HEK293 (cell line): ENCODE measurements at regions of chr17 and their contacts with region 1.

Region 1: DNA sequence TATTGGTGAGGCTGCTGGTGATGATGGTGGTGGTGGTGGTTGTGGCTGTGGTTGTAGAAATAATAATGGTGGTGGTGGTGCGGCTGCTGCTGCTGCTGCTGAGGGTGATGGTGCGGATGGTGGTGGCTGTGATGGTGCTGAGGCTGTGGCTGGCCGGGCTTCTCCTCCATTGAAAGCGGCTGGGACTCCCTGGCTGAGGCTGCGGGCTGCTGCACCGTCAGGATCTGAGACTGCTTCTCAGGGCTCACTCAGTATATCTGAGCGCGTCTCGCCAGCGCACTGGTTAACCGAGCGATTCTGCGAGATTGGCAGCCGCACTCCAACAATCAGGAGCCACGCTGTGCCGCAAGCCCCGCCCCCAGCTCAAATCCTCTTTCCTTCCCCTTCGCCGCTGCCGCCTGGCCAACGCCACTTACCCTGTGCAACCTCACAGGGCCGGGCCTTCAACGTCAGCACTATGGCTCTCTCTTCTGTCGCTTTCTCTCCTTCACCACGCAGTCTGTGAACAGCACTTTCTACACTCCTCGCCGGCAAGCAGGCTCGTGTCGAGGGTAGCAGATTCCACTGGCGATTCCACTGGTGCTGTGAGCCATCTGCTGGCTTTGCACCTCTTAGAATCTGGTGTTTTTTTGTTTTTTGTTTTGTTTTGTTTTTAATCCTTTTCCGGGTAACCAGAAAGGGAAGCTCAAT is at the start of gene NUFIP2:
- H3K4me3 ChIP-seq: peak within 1 kb of the TSS; percentile 86
- H3K27ac ChIP-seq: peak within 1 kb of the TSS; percentile 99
- H3K4me1 ChIP-seq: peaks cover 11% of the 10 kb centered on the region
- CTCF ChIP-seq: no peak; the same call in 1 of the 2 replicates

Region 2: DNA sequence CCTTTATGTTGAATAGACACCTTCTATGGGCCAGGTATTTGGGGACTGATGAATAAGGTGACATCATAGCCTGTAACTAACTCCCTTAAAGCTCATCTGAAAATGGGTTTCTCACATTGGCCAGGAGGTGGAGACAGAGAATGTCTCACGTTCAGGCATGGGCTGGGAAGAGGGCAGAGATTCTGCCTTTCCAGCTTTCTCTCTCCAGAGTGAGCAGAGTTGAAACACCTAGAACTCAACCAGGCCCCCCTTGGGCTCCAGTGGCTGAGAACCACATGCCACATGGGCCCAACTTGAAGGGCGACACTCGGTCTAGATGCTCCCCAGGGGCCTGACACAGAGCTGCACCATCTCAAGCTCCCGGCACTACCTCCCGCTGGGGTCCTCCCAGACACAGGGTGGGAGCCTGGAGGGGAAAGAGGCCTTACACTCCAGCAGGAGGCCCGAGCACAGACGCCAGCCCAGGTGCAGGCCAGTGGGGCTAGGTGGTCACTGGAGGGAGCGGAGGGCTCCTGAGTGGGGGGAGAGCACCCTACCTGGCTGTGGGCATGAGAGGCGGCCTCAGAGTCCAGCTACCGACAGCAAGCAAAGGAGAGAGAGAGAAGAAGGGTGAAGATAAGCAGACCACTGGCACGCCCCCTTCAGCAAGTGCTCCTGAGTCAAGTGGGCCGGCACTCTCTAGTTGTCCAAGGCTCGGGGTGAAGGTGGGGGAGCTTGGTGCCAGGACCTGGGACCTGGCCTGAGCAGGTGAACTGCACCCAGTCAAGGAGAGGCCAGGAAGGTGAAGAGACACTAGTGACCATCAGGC is 169.7 kb before region 1 on chr17:
- CTCF ChIA-PET with region 1: interaction called, 21 read pairs
- POLR2A ChIA-PET with region 1: interaction called, 3 read pairs
- H3K4me3 ChIP-seq: no peak overlapping the region
- H3K27ac ChIP-seq: no peak overlapping the region
- H3K4me1 ChIP-seq: no peaks in the 10 kb centered on the region
- CTCF ChIP-seq: peak; percentile 69

Region 3: DNA sequence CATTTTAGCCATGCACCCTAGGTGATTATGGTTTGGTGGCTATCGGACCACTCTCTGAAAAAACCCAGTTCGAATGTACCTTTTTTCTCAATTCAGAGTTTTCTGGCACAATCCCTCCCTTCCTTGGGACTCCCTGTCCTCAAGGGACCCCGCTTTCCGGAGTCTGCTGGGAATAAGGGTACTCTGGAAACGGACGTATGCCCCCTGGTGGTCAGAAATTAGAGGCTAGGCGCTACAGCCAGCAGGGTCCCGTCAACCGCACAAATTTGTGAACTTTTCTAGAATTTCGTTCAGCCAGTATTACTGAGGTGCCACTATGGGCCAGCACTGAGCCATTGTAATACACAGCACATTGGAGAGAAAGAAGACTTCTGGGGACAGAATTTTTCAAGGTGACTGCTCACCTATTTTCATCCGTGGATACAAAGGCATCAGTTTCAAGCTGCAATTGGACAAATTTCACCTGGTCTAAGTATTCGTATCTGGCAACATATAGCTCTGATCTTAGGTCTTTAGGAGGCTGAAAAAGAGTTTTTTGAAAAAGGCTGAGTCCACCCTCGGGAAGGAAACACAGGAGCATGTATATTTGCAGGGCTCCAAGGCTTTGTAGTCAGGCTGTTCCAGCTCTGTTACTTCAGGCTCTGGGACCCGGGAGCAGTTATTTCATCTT is 74.5 kb before region 1 on chr17:
- CTCF ChIA-PET with region 1: interaction called, 26 read pairs
- POLR2A ChIA-PET with region 1: interaction called, 3 read pairs
- H3K4me3 ChIP-seq: no peak overlapping the region
- H3K27ac ChIP-seq: no peak overlapping the region
- H3K4me1 ChIP-seq: no peaks in the 10 kb centered on the region
- CTCF ChIP-seq: peak; percentile 94

Region 4: DNA sequence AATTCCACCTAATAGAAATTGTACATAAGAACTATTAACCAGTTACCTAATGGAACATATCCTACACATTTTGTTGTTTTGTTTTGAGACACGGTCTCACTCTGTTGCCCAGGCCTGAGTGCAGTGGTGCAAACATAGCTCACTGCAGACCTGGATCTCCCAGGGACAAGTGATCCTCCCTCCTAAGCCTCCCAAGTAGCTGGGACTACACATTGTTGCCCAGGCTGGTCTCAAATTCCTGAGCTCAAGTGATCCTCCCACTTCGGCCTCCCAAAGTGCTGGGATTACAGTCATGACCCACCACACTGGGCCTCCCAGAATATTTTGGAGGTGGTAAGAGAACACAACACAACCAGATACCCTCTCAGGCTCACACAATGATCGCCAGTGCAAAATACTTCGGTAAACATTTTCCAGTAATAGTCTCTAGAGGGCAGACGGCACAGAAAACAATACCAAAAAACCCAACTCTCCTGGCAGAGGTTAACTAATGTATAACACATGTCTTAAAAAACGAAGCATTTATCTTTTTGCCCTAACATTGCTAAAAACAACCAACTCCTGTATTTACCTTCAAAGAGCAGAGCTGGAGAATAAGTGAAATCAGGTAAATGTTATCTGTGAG is 10.7 kb before region 1 on chr17:
- CTCF ChIA-PET with region 1: interaction called, 20 read pairs
- POLR2A ChIA-PET with region 1: interaction called, 19 read pairs
- H3K4me3 ChIP-seq: no peak overlapping the region
- H3K27ac ChIP-seq: no peak overlapping the region
- H3K4me1 ChIP-seq: peaks cover 4% of the 10 kb centered on the region; the same call in 1 of the 2 replicates
- CTCF ChIP-seq: no peak

Region 5: GRCh38 chr17:29389982-29390850 is 96.2 kb after region 1 on chr17 and contains the start of gene TAOK1:
- CTCF ChIA-PET with region 1: no interaction called
- POLR2A ChIA-PET with region 1: interaction called, 15 read pairs
- H3K4me3 ChIP-seq: peak within 1 kb of the TSS; percentile 60
- H3K27ac ChIP-seq: peak within 1 kb of the TSS; percentile 99
- H3K4me1 ChIP-seq: peaks cover 12% of the 10 kb centered on the region; the same call in 1 of the 2 replicates
- CTCF ChIP-seq: no peak; the same call in 1 of the 2 replicates